Naive thymus-derived CD4-positive, alpha-beta T cell (primary cell): ENCODE measurements at regions of chr2 and their contacts with region 1.

Region 1: DNA sequence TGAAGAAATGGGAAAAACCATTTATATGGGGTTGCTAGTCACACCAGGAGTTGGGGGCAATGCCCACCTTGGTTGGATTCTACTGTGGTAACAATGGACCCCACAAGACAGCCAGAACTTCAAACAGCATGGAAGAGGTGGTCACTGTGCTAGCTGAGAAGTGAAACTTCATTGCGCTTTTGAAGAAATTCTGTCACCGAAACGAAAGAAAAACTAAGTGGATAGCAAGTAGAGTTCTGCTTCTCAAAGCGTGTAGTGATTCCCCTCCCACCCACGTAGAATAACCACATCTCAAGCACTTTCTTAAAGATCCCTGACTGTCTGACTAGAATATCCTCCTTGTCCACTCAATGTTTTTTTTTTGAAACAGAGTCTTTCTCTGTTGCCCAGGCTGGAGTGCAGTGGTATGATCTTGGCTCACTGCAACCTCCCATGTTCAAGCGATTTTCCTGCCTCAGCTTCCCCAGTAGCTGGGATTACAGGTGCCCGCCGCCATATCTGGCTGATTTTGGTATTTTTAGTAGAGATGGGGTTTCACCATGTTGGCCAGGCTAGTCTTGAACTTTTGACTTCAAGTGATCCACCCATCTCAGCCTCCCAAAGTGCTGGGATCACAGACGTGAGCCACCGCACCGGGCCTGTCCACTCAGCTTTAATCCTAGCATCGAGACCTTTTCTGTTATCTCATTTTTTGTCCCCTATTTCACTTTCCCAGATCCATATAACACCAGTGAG is 30.1 kb upstream of the CCL20 start:
- DNase-seq: peak in 2 of 9 donors; percentile 8 to 13
- ATAC-seq: peak; percentile 69
- H3K4me3 ChIP-seq: no peak overlapping the region
- H3K4me3 Mint-ChIP-seq: peak overlapping the region; percentile 53 to 84 (median 72)
- H3K27ac ChIP-seq: no peak overlapping the region
- H3K27ac Mint-ChIP-seq: peak overlapping the region in 6 of 9 donors; percentile 7 to 81 (median 48)
- H3K4me1 ChIP-seq: no peaks in the 10 kb centered on the region
- H3K4me1 Mint-ChIP-seq: peaks cover 0 to 14% (median 3%) of the 10 kb centered on the region in 7 donors
- H3K27me3 ChIP-seq: no peaks in the 10 kb centered on the region
- H3K27me3 Mint-ChIP-seq: peaks cover 0 to 27% (median 6%) of the 10 kb centered on the region in 5 donors

Region 2: GRCh38 chr2:227805578-227805977 is 22.0 kb after region 1 on chr2:
- CTCF ChIA-PET with region 1: no interaction called
- POLR2A ChIA-PET with region 1: no interaction called
- intact Hi-C with region 1: loop called in 1 of 2 experiments (anchors 1 kb)
- DNase-seq: peak in 4 of 9 donors; percentile 11 to 13 (median 12)
- ATAC-seq: peak; percentile 78
- H3K4me3 ChIP-seq: peak overlapping the region; percentile 12
- H3K4me3 Mint-ChIP-seq: peak overlapping the region in 9 of 10 donors; percentile 41 to 80 (median 72)
- H3K27ac ChIP-seq: no peak overlapping the region
- H3K27ac Mint-ChIP-seq: peak overlapping the region in 6 of 9 donors; percentile 2 to 81 (median 50)
- H3K4me1 ChIP-seq: peaks cover 0 to 5% of the 10 kb centered on the region in 2 donors
- H3K4me1 Mint-ChIP-seq: peaks cover 0 to 11% (median 7%) of the 10 kb centered on the region in 7 donors
- H3K27me3 ChIP-seq: no peaks in the 10 kb centered on the region
- H3K27me3 Mint-ChIP-seq: peaks cover 0 to 19% (median 2%) of the 10 kb centered on the region in 5 donors

Region 3: DNA sequence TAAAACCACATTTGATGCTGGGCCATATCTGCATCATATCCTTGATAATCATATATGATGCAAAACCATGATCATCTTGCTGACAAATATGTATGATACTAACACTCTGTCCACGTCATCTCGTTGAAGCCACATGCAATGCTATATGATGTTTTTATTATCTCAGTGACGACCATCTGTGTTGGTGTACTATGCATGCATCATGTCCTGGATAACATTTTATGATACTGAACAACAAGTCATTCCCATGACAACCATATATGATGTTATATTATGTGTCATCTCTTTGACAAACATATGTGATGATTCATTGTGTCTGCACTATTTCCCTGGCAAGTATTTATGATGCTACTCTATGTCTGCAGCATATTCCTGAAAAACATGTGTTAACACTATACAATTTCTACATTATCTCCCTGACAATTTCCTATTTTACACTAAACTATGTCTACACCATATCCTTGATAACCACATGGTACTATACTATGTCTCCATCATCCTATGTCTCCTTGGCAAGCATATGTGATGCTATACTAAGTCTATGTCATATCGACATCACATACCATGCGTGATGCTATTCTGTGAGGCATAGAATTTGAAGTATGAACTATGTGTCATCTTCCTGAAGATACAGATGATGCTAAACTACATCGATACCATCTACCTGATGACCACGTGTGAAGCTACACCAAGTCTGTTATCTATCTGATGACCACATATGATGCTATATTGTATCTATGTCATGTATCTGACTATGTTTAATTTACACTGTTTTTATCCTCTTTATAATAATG is 124.9 kb after region 1 on chr2:
- CTCF ChIA-PET with region 1: no interaction called
- POLR2A ChIA-PET with region 1: no interaction called
- intact Hi-C with region 1: no loop called
- DNase-seq: no peak
- ATAC-seq: no peak
- H3K4me3 ChIP-seq: no peak overlapping the region
- H3K4me3 Mint-ChIP-seq: no peak overlapping the region
- H3K27ac ChIP-seq: no peak overlapping the region
- H3K27ac Mint-ChIP-seq: no peak overlapping the region
- H3K4me1 ChIP-seq: no peaks in the 10 kb centered on the region
- H3K4me1 Mint-ChIP-seq: no peaks in the 10 kb centered on the region
- H3K27me3 ChIP-seq: no peaks in the 10 kb centered on the region
- H3K27me3 Mint-ChIP-seq: peaks cover 0 to 8% (median 0%) of the 10 kb centered on the region in 5 donors